ENCODE measurements at regions of chr10 and their contacts with region 1.

Region 1: GRCh38 chr10:25501912-25502311 is 327.1 kb downstream of the GPR158 start:
- DNase-seq: no peak
- H3K4me3 ChIP-seq: no peak overlapping the region
- H3K27ac ChIP-seq: no peak overlapping the region
- H3K4me1 ChIP-seq: peaks cover 5% of the 10 kb centered on the region; the same call in 1 of the 2 replicates
- H3K27me3 ChIP-seq: no peaks in the 10 kb centered on the region
- CTCF ChIP-seq: no peak

Region 2: GRCh38 chr10:25016376-25017154 is 485.3 kb before region 1 on chr10 and contains the start of gene THNSL1:
- CTCF ChIA-PET with region 1: no interaction called
- POLR2A ChIA-PET with region 1: interaction called, 16 read pairs
- intact Hi-C with region 1: no loop called
- DNase-seq: peak; percentile 93 to 97
- H3K4me3 ChIP-seq: peak within 1 kb of the TSS; percentile 80
- H3K27ac ChIP-seq: peak within 1 kb of the TSS; percentile 92
- H3K4me1 ChIP-seq: peaks cover 15% of the 10 kb centered on the region; the same call in 1 of the 2 replicates
- H3K27me3 ChIP-seq: no peaks in the 10 kb centered on the region
- CTCF ChIP-seq: no peak
- total RNA-seq, gene THNSL1: 5.6 and 6.8 TPM in 2 replicates

Region 3: DNA sequence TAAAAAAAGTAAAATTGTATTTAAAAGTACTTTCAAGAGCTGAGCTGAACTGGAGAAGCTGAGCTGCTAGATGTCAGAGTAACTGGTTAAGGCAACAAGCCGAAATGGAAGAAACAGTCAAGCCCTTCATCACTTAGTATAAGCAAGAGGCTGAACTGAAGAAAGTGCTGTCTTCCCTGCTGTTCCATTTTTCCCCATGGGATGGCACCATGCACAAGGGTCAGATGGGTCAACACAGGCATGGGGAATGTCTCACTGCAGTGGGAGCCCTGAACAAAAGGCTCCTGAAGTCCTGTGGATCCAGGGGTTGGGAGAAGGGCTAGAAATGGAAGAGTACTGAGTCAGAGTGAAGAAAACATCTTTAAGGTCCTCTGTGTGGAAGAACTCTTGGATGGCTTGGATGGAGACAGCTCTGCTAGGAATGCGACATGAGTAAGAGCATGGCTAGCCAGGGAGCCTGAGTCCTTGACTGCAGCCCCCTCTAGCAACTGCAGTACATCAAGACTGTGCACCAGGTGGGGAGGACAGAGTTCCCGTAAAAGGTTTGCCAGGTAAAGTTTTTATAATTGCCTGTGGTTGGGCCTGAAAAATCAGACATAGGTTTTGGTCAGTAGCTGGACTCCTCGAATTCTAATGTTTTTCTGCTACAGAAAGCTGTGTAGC is 21.2 kb after region 1 on chr10:
- CTCF ChIA-PET with region 1: no interaction called
- POLR2A ChIA-PET with region 1: no interaction called
- intact Hi-C with region 1: loop called (anchors 2 kb)
- DNase-seq: no peak
- H3K4me3 ChIP-seq: no peak overlapping the region
- H3K27ac ChIP-seq: no peak overlapping the region
- H3K4me1 ChIP-seq: no peaks in the 10 kb centered on the region
- H3K27me3 ChIP-seq: no peaks in the 10 kb centered on the region
- CTCF ChIP-seq: no peak

Region 4: DNA sequence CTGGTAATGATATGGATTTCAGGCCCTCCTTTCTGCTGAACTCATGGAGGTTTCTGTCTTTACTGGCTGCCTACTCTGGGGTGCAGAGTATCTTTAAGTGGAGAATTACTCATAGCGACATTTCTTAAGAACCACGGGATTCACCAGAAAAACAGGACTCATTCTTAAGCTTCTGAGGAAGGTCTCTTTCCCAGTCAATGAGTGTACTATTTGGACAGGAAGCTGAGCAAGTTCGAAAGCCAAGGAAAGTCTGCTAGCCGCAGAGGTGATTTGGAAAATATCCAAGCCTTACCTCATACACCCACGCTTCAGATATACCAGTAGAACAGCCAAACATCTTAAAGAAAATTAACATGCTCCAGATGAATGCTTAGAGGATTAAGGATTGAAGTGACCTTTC is 54.6 kb after region 1 on chr10:
- CTCF ChIA-PET with region 1: no interaction called
- POLR2A ChIA-PET with region 1: no interaction called
- intact Hi-C with region 1: loop called (anchors 5 kb)
- DNase-seq: peak; percentile 38 to 59
- H3K4me3 ChIP-seq: no peak overlapping the region
- H3K27ac ChIP-seq: no peak overlapping the region
- H3K4me1 ChIP-seq: 0 out of 2 replicates have a peak, but pooled peaks cover 3% of the 10 kb centered on the region
- H3K27me3 ChIP-seq: no peaks in the 10 kb centered on the region
- CTCF ChIP-seq: no peak